K562 (cell line): ENCODE measurements at regions of chr5 and their contacts with region 1.

Region 1: GRCh38 chr5:164224772-164225171 is 719.4 kb downstream of the MAT2B start:
- DNase-seq: no peak
- ATAC-seq: peak; percentile 70
- H3K4me3 ChIP-seq: no peak overlapping the region
- H3K27ac ChIP-seq: no peak overlapping the region
- H3K4me1 ChIP-seq: no peaks in the 10 kb centered on the region; a peak in 1 of 5 replicates
- H3K27me3 ChIP-seq: no peaks in the 10 kb centered on the region
- CTCF ChIP-seq: no peak
- EP300 ChIP-seq: no peak
- POLR2A ChIP-seq: no peak
- RAD21 ChIP-seq: no peak

Region 2: GRCh38 chr5:163552536-163552935 is 672.2 kb before region 1 on chr5:
- CTCF ChIA-PET with region 1: no interaction called
- POLR2A ChIA-PET with region 1: no interaction called
- in situ Hi-C with region 1: no loop called
- intact Hi-C with region 1: loop called (anchors 5 kb)
- DNase-seq: no peak
- ATAC-seq: no peak
- H3K4me3 ChIP-seq: no peak overlapping the region
- H3K27ac ChIP-seq: no peak overlapping the region
- H3K4me1 ChIP-seq: no peaks in the 10 kb centered on the region
- H3K27me3 ChIP-seq: no peaks in the 10 kb centered on the region; a peak in 1 of 5 replicates
- CTCF ChIP-seq: no peak
- EP300 ChIP-seq: no peak
- POLR2A ChIP-seq: no peak
- RAD21 ChIP-seq: no peak

Region 3: GRCh38 chr5:164422400-164422799 is 197.6 kb after region 1 on chr5:
- CTCF ChIA-PET with region 1: no interaction called
- POLR2A ChIA-PET with region 1: no interaction called
- in situ Hi-C with region 1: no loop called
- intact Hi-C with region 1: loop called (anchors 1 kb)
- DNase-seq: peak in 2 of 4 experiments; percentile 13 to 57
- ATAC-seq: peak; percentile 79
- H3K4me3 ChIP-seq: no peak overlapping the region
- H3K27ac ChIP-seq: no peak overlapping the region
- H3K4me1 ChIP-seq: no peaks in the 10 kb centered on the region
- H3K27me3 ChIP-seq: no peaks in the 10 kb centered on the region
- CTCF ChIP-seq: peak in 1 of 3 experiments; percentile 51; a peak in 3 of 6 replicates
- EP300 ChIP-seq: no peak
- POLR2A ChIP-seq: no peak
- RAD21 ChIP-seq: peak; percentile 11 to 64; a peak in 2 of 4 replicates

Region 4: GRCh38 chr5:164475339-164475977 is 250.7 kb after region 1 on chr5:
- CTCF ChIA-PET with region 1: no interaction called
- POLR2A ChIA-PET with region 1: no interaction called
- in situ Hi-C with region 1: no loop called
- intact Hi-C with region 1: loop called (anchors 1 kb)
- DNase-seq: peak in 2 of 4 experiments; percentile 18 to 52
- ATAC-seq: peak; percentile 84
- H3K4me3 ChIP-seq: no peak overlapping the region
- H3K27ac ChIP-seq: no peak overlapping the region
- H3K4me1 ChIP-seq: no peaks in the 10 kb centered on the region
- H3K27me3 ChIP-seq: no peaks in the 10 kb centered on the region
- CTCF ChIP-seq: peak; percentile 47 to 85 (median 61); a peak in 5 of 6 replicates
- EP300 ChIP-seq: no peak
- POLR2A ChIP-seq: no peak
- RAD21 ChIP-seq: peak; percentile 93 to 94

Region 5: GRCh38 chr5:164540174-164540573 is 315.4 kb after region 1 on chr5:
- CTCF ChIA-PET with region 1: no interaction called
- POLR2A ChIA-PET with region 1: no interaction called
- in situ Hi-C with region 1: no loop called
- intact Hi-C with region 1: no loop called
- DNase-seq: no peak
- ATAC-seq: no peak
- H3K4me3 ChIP-seq: no peak overlapping the region
- H3K27ac ChIP-seq: no peak overlapping the region
- H3K4me1 ChIP-seq: no peaks in the 10 kb centered on the region
- H3K27me3 ChIP-seq: no peaks in the 10 kb centered on the region
- CTCF ChIP-seq: no peak
- EP300 ChIP-seq: no peak
- POLR2A ChIP-seq: no peak
- RAD21 ChIP-seq: no peak